CD4-positive, alpha-beta memory T cell (primary cell): ENCODE measurements at regions of chr6 and their contacts with region 1.

Region 1: DNA sequence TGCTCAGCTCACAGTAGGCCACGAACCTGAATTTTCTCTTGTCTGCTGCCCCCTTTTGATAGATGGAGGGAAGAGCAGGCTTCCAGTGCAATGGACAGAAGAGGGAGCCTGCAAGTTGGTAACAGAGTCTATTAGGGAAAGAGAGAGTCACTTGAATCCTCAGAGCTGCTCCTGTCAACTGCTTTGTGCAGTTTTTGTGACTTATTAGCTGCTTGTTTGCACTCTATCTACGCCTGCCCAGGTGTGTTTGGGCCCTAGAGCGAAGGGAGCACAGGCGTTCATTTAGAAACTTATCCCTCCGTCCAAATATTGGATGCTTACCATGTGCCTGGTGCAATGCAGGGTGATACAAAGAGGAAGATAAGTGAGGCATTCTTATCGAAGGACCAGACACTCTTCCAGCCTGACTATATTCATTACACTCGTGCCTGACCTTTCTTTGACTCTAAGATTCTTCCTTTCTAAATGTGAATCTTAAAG is 11.6 kb upstream of the SLC2A12 start:
- DNase-seq: peak; percentile 56 to 62 (median 59)
- H3K4me3 ChIP-seq: no peak overlapping the region
- H3K4me3 Mint-ChIP-seq: no peak overlapping the region
- H3K27ac ChIP-seq: no peak overlapping the region
- H3K27ac Mint-ChIP-seq: no peak overlapping the region
- H3K4me1 ChIP-seq: peaks cover 4% of the 10 kb centered on the region
- H3K4me1 Mint-ChIP-seq: peaks cover 0 to 2% (median under 1%) of the 10 kb centered on the region in 4 donors
- H3K27me3 ChIP-seq: no peaks in the 10 kb centered on the region
- H3K27me3 Mint-ChIP-seq: peaks cover 2 to 4% of the 10 kb centered on the region in 2 donors

Region 2: DNA sequence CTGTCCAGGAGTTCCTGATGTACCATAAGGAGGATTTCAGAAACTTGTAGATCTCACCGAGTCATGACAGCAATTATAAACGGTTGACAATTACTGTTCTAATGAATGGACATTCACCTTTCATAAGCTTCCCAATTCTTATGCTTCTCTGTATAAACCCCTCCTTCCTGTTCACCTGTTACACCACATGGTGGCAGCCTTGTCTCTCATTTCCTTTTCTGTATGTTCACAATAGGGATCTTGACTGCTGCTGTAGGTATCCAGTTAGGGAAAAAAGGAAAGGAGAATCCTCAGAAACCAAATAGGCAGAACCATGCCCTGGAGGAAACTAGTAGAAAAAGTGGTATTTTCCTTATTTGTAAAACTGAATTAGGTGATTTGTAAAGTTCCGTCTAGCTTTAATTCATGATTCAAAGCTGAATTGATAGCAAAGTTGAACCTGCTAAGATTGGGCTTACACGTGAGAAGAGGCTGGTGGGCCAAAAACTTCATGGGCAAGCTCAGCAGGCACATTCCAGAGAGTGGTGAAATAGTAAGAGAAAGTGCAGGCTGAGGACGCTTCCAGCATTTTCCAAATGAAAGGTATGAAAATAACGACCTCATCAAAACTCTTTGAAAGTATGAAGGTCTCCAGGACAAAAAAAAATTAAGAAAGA is 139.9 kb before region 1 on chr6:
- CTCF ChIA-PET with region 1: interaction called, 207 read pairs
- POLR2A ChIA-PET with region 1: no interaction called
- intact Hi-C with region 1: loop called (anchors 1 kb)
- DNase-seq: peak; percentile 56 to 62 (median 57)
- H3K4me3 ChIP-seq: no peak overlapping the region
- H3K4me3 Mint-ChIP-seq: no peak overlapping the region
- H3K27ac ChIP-seq: no peak overlapping the region
- H3K27ac Mint-ChIP-seq: no peak overlapping the region
- H3K4me1 ChIP-seq: no peaks in the 10 kb centered on the region
- H3K4me1 Mint-ChIP-seq: no peaks in the 10 kb centered on the region
- H3K27me3 ChIP-seq: no peaks in the 10 kb centered on the region
- H3K27me3 Mint-ChIP-seq: peaks cover 15 to 21% of the 10 kb centered on the region in 2 donors

Region 3: GRCh38 chr6:133966654-133967329 is 97.2 kb before region 1 on chr6:
- CTCF ChIA-PET with region 1: interaction called, 18 read pairs
- POLR2A ChIA-PET with region 1: no interaction called
- intact Hi-C with region 1: no loop called
- DNase-seq: no peak
- H3K4me3 ChIP-seq: no peak overlapping the region
- H3K4me3 Mint-ChIP-seq: peak overlapping the region in 1 of 8 donors; percentile 7
- H3K27ac ChIP-seq: no peak overlapping the region
- H3K27ac Mint-ChIP-seq: peak overlapping the region in 5 of 7 donors; percentile 6 to 74 (median 24)
- H3K4me1 ChIP-seq: peaks cover 72% of the 10 kb centered on the region
- H3K4me1 Mint-ChIP-seq: peaks cover 47 to 78% (median 65%) of the 10 kb centered on the region in 4 donors
- H3K27me3 ChIP-seq: no peaks in the 10 kb centered on the region
- H3K27me3 Mint-ChIP-seq: no peaks in the 10 kb centered on the region

Region 4: GRCh38 chr6:134026597-134026996 is 37.4 kb before region 1 on chr6:
- CTCF ChIA-PET with region 1: interaction called, 12 read pairs
- POLR2A ChIA-PET with region 1: no interaction called
- intact Hi-C with region 1: no loop called
- DNase-seq: no peak
- H3K4me3 ChIP-seq: no peak overlapping the region
- H3K4me3 Mint-ChIP-seq: no peak overlapping the region
- H3K27ac ChIP-seq: no peak overlapping the region
- H3K27ac Mint-ChIP-seq: no peak overlapping the region
- H3K4me1 ChIP-seq: no peaks in the 10 kb centered on the region
- H3K4me1 Mint-ChIP-seq: no peaks in the 10 kb centered on the region
- H3K27me3 ChIP-seq: no peaks in the 10 kb centered on the region
- H3K27me3 Mint-ChIP-seq: peaks cover 0 to 6% of the 10 kb centered on the region in 2 donors

Region 5: DNA sequence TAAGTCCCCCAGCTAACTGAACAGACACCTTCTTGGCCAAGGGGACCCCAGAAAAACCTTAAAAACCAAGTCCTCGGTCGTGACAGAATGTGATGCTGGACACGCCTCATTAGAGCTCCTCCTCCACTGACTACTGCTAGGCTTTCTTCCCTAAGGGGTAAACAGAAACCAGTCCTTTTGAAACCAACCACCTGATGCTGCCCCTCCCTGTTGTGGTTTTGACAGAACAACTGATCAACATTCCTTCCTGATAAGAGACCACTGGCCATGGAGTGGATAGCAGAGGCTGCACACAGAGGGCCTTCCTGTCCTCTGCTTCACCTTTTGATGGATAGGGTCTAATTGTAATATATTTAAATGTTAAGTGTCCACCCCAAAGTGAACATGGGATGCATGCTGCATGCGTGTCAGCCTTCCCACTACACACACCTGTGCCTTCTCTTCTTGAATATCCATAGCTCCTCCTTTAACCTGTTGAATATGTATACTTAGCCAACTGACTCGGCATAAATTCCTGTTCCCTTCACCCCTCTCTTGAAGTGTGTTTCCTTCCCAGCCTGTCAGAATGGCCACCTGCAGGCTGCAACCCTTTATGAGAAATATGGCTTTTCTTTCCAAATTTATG is 16.3 kb after region 1 on chr6:
- CTCF ChIA-PET with region 1: interaction called, 33 read pairs
- POLR2A ChIA-PET with region 1: no interaction called
- intact Hi-C with region 1: no loop called
- DNase-seq: peak in 1 of 5 donors; percentile 11
- H3K4me3 ChIP-seq: no peak overlapping the region
- H3K4me3 Mint-ChIP-seq: peak overlapping the region in 5 of 8 donors; percentile 24 to 46 (median 27)
- H3K27ac ChIP-seq: no peak overlapping the region
- H3K27ac Mint-ChIP-seq: peak overlapping the region in 2 of 7 donors; percentile 9 to 17
- H3K4me1 ChIP-seq: peaks cover 9% of the 10 kb centered on the region
- H3K4me1 Mint-ChIP-seq: peaks cover 13 to 20% (median 17%) of the 10 kb centered on the region in 4 donors
- H3K27me3 ChIP-seq: no peaks in the 10 kb centered on the region
- H3K27me3 Mint-ChIP-seq: no peaks in the 10 kb centered on the region